ENCODE measurements at regions of chrX and their contacts with region 1.

Region 1: DNA sequence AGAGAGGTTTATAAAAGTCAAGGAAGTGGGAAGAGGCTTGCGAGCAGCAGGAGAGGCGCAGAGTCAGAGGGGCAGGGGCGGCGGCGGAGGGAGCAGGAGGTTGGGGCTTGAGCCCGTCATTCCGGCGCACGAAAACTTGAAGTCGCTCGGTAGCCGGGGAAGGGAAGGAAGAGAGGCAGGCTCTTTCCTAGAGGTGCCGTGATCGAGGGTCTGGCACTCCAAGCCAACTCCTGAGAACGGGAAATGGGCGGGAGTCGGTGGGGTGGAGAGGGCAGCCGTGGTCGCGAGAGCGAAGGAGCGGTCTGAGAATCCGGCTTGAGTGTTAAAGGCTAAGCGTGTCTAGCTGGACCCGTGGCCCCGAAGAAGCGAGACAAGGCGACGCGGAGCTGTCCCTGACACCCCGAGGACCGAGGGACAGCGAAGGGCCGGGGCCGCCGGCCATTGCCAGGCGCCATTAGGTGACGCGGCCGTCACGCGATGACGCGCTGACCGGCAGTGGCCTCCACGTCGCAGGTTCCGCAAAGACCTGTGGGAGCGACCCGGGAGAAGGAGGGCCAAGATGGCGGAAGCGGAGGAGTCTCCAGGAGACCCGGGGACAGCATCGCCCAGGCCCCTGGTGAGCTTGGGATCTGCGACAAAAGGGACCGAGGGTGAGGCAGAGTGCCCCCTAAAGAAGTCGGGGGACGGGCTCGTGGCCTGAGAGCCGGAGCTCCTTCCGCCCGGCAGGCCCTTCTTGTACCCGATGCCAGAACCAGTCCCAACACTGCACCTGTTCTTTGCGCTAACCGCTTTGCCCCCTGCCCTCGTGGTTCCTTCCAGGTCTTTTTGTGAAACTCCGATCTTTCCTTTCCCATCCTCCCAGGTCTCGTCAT is at the start of gene YIPF6:
- DNase-seq: peak; percentile 22 to 87
- H3K4me3 ChIP-seq: peak within 1 kb of the TSS; percentile 62 to 66
- H3K27ac ChIP-seq: peak within 1 kb of the TSS; percentile 85 to 95
- H3K4me1 ChIP-seq: no peaks in the 10 kb centered on the region
- H3K27me3 ChIP-seq: no peaks in the 10 kb centered on the region
- CTCF ChIP-seq: no peak
- total RNA-seq, gene YIPF6: 14.4 TPM

Region 2: GRCh38 chrX:67543818-67544217 is 954.9 kb before region 1 on chrX and contains the start of gene AR:
- intact Hi-C with region 1: loop called (anchors 5 kb)
- DNase-seq: peak; percentile 17 to 83
- H3K4me3 ChIP-seq: peak within 1 kb of the TSS; percentile 42 to 68
- H3K27ac ChIP-seq: peak within 1 kb of the TSS; percentile 70 to 79
- H3K4me1 ChIP-seq: no peaks in the 10 kb centered on the region
- H3K27me3 ChIP-seq: no peaks in the 10 kb centered on the region
- CTCF ChIP-seq: no peak
- total RNA-seq, gene AR: 16.3 TPM

Region 3: DNA sequence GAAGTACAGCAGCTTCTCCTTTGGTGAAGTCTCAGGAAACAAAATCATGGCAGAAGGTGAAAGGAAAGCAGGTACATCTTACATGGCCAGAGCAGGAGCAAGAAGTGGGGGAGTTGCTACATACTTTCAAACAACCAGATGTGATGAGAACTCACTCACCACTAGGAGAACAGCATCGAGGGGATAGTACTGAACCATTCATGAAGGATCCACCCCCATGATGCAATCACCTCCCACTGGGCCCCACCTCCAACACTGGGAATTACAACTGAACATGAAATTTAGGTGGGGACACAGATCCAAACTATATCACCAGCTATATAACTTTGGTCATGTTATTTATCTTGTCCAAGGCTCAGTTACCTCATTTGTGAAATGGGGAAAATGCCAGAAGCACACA is 224.9 kb before region 1 on chrX:
- intact Hi-C with region 1: no loop called
- DNase-seq: no peak
- H3K4me3 ChIP-seq: no peak overlapping the region
- H3K27ac ChIP-seq: no peak overlapping the region
- H3K4me1 ChIP-seq: no peaks in the 10 kb centered on the region
- H3K27me3 ChIP-seq: no peaks in the 10 kb centered on the region
- CTCF ChIP-seq: no peak

Region 4: DNA sequence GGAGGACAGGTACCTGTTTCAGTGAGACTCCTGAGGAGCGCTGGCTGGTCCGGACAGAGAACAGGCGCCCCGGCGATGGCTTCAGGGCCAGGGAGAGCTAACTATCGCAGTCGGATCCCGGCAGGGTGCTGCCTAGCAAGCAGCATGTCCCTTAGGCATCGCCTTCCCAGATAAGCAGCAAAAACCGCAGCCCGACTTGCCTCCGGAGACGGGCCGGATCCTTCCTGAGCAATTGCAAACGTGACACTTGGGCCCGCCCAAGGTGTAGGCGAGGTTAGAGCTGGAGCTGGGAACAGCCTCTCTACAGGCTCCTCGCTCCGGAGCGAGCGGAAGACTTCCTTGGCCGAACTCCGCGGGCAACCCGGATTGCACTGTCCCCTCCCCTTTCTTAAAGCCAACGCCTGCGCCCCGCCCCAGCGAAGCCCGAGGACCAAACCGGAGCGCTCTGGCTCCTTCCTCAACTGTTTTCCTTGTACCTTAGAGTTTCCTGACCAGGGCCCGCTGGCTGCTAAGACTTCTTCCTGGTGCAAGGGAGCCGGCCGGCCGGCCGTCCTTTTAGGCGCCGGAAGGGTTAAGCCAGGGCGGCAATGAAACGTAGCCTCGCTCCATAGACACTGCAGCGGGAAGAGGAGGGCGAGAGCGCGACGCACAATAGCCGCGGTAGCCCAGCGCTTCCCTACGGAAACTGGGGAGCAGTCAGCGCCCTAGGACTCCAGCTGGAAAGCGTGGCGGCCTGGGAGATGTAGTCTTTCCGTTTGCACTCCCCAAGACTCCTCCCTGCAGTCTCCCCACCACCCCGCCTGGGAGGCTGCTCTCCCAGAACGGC is 65.4 kb before region 1 on chrX and contains the start of gene OPHN1:
- intact Hi-C with region 1: loop called (anchors 2 kb)
- DNase-seq: peak; percentile 8 to 80
- H3K4me3 ChIP-seq: peak within 1 kb of the TSS; percentile 50 to 73
- H3K27ac ChIP-seq: peak within 1 kb of the TSS; percentile 78 to 81
- H3K4me1 ChIP-seq: no peaks in the 10 kb centered on the region
- H3K27me3 ChIP-seq: no peaks in the 10 kb centered on the region
- CTCF ChIP-seq: no peak
- total RNA-seq, gene OPHN1: 5.6 TPM